IMR-90 (cell line): ENCODE measurements at regions of chr16 and their contacts with region 1.

Region 1: GRCh38 chr16:19130852-19131810 is 17.4 kb downstream of the ITPRIPL2 start:
- DNase-seq: peak; percentile 82
- ATAC-seq: peak; percentile 71
- H3K4me3 ChIP-seq: no peak overlapping the region
- H3K27ac ChIP-seq: peak overlapping the region; percentile 77
- H3K4me1 ChIP-seq: peaks cover 23% of the 10 kb centered on the region
- H3K27me3 ChIP-seq: no peaks in the 10 kb centered on the region
- CTCF ChIP-seq: no peak
- POLR2A ChIP-seq: no peak
- RAD21 ChIP-seq: no peak

Region 2: GRCh38 chr16:19118938-19119431 is 12.1 kb before region 1 on chr16:
- CTCF ChIA-PET with region 1: interaction called, 6 read pairs
- POLR2A ChIA-PET with region 1: interaction called, 16 read pairs
- dilution Hi-C with region 1: no loop called
- in situ Hi-C with region 1: no loop called
- intact Hi-C with region 1: no loop called
- DNase-seq: peak; percentile 95
- ATAC-seq: peak; percentile 53
- H3K4me3 ChIP-seq: peak overlapping the region; percentile 67
- H3K27ac ChIP-seq: peak overlapping the region; percentile 96
- H3K4me1 ChIP-seq: peaks cover 32% of the 10 kb centered on the region
- H3K27me3 ChIP-seq: no peaks in the 10 kb centered on the region
- CTCF ChIP-seq: no peak
- POLR2A ChIP-seq: no peak
- RAD21 ChIP-seq: no peak